ENCODE measurements at regions of chr7 and their contacts with region 1.

Region 1: GRCh38 chr7:45160417-45160881 is 2.9 kb downstream of the RAMP3 start:
- DNase-seq: no peak
- H3K4me3 ChIP-seq: no peak overlapping the region
- H3K27ac ChIP-seq: no peak overlapping the region
- H3K4me1 ChIP-seq: no peaks in the 10 kb centered on the region
- H3K27me3 ChIP-seq: peaks cover 9% of the 10 kb centered on the region
- CTCF ChIP-seq: no peak

Region 2: GRCh38 chr7:45446195-45446944 is 285.9 kb after region 1 on chr7:
- CTCF ChIA-PET with region 1: no interaction called
- dilution Hi-C with region 1: no loop called
- in situ Hi-C with region 1: no loop called
- intact Hi-C with region 1: no loop called
- DNase-seq: peak; percentile 90
- H3K4me3 ChIP-seq: no peak overlapping the region
- H3K27ac ChIP-seq: peak overlapping the region; percentile 83
- H3K4me1 ChIP-seq: peaks cover 29% of the 10 kb centered on the region
- H3K27me3 ChIP-seq: no peaks in the 10 kb centered on the region
- CTCF ChIP-seq: no peak

Region 3: DNA sequence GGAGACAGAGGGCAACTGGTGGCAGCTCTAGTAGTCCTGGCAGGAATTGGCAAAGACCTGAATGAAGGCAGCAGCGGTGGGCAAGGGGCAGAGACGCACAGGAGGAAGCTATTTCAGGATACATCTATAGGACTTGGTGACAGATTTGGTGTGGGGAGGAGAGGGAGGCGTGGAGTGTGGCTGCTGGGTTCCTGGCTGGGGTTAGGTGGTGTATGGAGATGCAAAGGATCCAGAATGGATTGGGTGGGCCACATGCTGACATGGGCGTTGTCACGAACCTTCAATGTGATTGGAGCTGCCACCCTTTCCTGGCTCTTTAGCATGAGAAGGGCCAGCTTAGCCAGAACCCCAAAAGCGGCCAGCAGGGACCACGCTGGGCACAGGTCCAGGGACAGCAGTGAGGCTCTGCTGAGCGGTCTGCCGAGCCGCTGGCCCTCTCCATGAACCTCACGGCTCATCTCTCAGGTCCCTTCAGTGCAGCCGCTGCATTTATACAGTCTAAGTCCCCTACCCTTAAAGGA is 403.6 kb after region 1 on chr7:
- CTCF ChIA-PET with region 1: no interaction called
- dilution Hi-C with region 1: no loop called
- in situ Hi-C with region 1: no loop called
- intact Hi-C with region 1: loop called (anchors 10 kb)
- DNase-seq: no peak
- H3K4me3 ChIP-seq: no peak overlapping the region
- H3K27ac ChIP-seq: no peak overlapping the region
- H3K4me1 ChIP-seq: peaks cover 4% of the 10 kb centered on the region
- H3K27me3 ChIP-seq: no peaks in the 10 kb centered on the region
- CTCF ChIP-seq: no peak

Region 4: DNA sequence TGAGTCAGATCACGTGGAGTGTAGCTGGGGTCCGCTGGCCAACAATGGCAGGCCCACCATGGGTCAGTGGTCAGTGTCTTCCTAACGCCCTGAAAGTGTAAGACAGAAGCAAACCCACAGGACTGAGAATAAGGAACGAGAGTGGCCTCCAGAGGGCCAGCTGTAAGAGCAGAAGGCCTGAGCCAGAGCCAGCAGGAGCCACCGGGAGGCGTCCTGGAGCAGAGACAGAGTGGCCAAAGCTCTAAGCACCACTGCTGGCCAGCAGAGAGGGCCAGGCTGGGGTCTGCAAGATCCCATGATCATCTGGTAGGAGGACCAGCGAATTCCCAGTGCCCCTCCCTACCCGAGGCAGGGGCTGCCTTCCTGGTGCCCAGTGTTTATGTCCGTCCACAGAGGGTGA is 703.3 kb after region 1 on chr7:
- CTCF ChIA-PET with region 1: no interaction called
- dilution Hi-C with region 1: no loop called
- in situ Hi-C with region 1: loop called (anchors 10 to 25 kb)
- intact Hi-C with region 1: no loop called
- DNase-seq: no peak
- H3K4me3 ChIP-seq: no peak overlapping the region
- H3K27ac ChIP-seq: no peak overlapping the region
- H3K4me1 ChIP-seq: no peaks in the 10 kb centered on the region
- H3K27me3 ChIP-seq: no peaks in the 10 kb centered on the region
- CTCF ChIP-seq: no peak

Region 5: DNA sequence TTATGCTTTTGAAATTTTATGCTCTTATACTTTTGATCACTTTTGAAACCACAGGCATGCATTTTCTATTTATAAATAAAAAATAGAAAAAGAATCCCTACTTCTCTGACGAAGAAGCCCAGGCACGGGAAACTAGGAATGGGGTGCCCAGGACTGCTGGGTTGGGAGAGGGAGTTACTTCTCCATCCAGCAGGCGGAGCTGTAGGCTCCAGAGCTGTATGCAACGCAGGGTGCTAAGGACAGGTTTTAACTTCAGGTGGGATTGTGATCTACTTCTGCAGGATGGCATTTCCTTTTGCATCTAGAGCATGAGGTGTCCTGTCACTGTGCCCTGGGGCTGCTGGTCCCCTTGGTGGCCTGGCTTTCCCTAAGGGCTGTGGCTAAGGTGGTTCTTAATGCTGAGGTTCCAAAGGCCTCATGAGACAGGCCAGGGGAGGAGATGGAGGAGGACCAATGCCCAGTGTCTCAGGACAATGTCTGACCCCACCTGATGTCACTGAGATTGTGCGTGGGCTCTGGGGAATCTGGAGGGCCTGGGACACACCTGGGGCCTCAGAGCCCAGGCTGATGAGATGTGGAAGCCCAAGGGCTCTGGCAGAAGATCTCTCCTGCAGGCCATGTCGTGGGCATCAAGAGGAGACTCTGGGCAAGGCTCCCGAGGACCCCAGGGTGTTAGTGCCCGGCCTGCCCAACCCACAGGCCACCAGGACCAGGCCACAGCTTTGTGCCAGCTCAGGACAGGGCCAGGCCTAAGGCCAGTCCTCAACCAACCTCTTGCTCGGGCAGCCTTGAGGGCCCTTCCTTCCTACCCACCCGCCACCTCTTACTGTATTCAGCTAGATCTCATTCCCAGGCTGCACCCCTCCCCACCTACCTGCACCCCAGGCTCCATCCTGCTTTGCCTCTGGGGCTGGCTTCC is 711.9 kb after region 1 on chr7:
- CTCF ChIA-PET with region 1: no interaction called
- dilution Hi-C with region 1: no loop called
- in situ Hi-C with region 1: loop called in 1 of 2 experiments (anchors 25 kb)
- intact Hi-C with region 1: no loop called
- DNase-seq: no peak
- H3K4me3 ChIP-seq: no peak overlapping the region
- H3K27ac ChIP-seq: no peak overlapping the region
- H3K4me1 ChIP-seq: peaks cover 17% of the 10 kb centered on the region
- H3K27me3 ChIP-seq: no peaks in the 10 kb centered on the region
- CTCF ChIP-seq: peak; percentile 52 to 65